Activated CD4-positive, alpha-beta T cell treated with anti-CD3 and anti-CD28 coated beads, Interleukin-2, amount 10 ng/mL, durations not matched to agents 7 days and 5 days (primary cell): ENCODE measurements at regions of chr11 and their contacts with region 1.

Region 1: DNA sequence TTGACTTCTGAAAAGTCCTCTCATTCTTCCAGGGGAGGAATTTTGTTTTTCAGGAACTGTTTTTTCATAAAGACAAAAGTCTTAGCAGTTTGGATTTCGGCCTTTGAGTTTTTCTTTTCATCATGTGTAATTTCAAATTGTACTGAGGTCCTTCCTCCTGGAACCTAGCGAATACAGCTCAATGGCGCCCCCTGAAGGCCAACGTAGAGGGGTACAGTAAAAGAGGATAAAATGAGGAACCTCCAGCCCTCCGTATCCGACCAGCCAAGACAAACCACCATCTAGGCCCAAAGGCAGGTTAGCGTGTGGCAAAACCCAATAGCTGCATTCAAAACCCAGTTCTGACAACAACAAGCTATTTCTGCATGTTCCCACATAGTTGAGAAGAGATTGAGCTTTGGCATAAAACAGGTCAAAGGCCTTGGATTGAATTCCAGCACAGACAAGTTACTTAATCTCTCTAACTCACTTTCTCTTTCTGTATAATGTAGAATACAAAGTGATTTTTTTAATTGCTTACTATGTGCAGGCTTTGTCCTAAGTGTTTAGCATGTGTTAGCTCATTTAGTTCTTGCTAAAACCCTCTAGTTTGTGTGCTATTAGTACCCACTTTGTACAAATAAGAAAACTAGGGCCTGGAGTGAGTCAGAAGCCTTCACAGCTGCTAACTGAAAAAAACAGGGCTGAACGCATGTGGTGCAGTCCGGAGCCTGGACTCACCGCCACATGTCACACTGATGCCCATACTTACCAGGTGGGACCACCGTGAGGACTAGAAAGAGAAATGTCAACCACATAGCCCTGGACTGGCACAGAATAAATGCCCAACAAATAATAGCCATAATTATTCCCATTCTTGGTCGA is 43.2 kb upstream of the ETS1 start:
- DNase-seq: peak; percentile 94
- H3K4me3 Mint-ChIP-seq: peak overlapping the region; percentile 24
- H3K27ac Mint-ChIP-seq: peak overlapping the region; percentile 71
- H3K4me1 Mint-ChIP-seq: peaks cover 71% of the 10 kb centered on the region
- H3K27me3 Mint-ChIP-seq: no peaks in the 10 kb centered on the region

Region 2: DNA sequence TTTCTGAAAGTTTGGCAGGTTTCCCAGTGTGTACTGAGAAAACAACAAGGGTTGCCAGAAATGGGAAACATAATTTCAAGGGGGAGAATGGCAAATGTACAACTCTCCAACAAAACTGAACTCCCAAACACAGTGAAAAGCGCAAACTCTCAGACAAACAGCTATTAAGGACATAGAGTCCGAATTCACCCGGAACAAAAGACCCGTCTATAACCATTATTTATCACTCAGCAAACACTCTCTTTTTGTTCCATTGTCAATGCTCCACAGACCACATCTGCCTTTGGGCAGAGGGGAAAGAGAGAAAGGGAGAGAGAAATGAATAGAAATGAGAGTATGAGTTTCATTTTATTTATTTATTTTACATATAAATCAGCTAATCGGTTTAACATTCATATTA is 1651.7 kb before region 1 on chr11:
- CTCF ChIA-PET with region 1: no interaction called
- POLR2A ChIA-PET with region 1: no interaction called
- DNase-seq: no peak
- H3K4me3 Mint-ChIP-seq: no peak overlapping the region
- H3K27ac Mint-ChIP-seq: no peak overlapping the region
- H3K4me1 Mint-ChIP-seq: no peaks in the 10 kb centered on the region
- H3K27me3 Mint-ChIP-seq: peaks cover 10% of the 10 kb centered on the region

Region 3: DNA sequence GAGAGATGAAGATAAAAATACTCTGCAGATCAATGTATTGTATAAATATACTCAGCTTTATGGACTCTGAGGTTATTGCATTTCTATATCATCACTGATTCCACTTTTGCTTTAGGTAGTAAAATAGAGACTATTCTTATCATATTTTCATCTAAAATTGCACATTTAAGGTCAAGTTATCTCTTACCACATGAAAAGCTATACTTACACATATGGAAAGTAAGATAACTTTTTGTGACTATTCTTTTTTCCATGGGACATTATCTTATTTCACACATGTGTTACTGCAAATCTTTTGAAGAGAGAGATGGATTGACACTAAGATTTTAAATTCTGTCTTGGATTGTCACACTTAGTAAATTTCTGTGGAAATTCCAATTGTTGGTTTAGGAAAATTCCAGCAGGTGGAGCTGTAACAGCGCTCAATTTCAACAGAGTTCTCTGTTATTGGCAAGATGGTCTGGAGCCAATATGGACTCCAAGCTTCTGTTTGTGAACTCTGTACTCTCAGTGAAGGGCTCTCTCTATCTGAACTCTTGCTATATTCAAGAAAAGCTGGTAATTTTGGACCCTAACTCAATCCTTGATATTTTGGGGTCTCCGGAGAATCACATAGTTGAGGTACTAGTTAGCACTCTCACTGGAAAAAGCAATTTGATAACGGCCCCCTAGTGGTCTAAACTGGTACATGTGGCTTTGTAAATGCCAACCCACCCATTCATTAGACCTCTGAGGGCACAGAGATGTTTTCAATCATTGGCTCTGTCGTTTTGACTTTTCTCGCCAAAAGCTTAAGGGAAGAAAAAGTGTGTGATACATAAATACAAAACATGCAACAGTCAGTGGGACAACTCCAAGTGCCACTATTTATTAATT is 472.9 kb before region 1 on chr11:
- CTCF ChIA-PET with region 1: interaction called, 15 read pairs
- POLR2A ChIA-PET with region 1: no interaction called
- DNase-seq: peak; percentile 74
- H3K4me3 Mint-ChIP-seq: peak overlapping the region; percentile 50
- H3K27ac Mint-ChIP-seq: peak overlapping the region; percentile 70
- H3K4me1 Mint-ChIP-seq: peaks cover 10% of the 10 kb centered on the region
- H3K27me3 Mint-ChIP-seq: peaks cover 20% of the 10 kb centered on the region

Region 4: GRCh38 chr11:128290106-128290840 is 340.3 kb before region 1 on chr11:
- CTCF ChIA-PET with region 1: interaction called, 14 read pairs
- POLR2A ChIA-PET with region 1: interaction called, 3 read pairs
- DNase-seq: peak; percentile 86
- H3K4me3 Mint-ChIP-seq: peak overlapping the region; percentile 83
- H3K27ac Mint-ChIP-seq: peak overlapping the region; percentile 94
- H3K4me1 Mint-ChIP-seq: peaks cover 90% of the 10 kb centered on the region
- H3K27me3 Mint-ChIP-seq: peaks cover 2% of the 10 kb centered on the region

Region 5: DNA sequence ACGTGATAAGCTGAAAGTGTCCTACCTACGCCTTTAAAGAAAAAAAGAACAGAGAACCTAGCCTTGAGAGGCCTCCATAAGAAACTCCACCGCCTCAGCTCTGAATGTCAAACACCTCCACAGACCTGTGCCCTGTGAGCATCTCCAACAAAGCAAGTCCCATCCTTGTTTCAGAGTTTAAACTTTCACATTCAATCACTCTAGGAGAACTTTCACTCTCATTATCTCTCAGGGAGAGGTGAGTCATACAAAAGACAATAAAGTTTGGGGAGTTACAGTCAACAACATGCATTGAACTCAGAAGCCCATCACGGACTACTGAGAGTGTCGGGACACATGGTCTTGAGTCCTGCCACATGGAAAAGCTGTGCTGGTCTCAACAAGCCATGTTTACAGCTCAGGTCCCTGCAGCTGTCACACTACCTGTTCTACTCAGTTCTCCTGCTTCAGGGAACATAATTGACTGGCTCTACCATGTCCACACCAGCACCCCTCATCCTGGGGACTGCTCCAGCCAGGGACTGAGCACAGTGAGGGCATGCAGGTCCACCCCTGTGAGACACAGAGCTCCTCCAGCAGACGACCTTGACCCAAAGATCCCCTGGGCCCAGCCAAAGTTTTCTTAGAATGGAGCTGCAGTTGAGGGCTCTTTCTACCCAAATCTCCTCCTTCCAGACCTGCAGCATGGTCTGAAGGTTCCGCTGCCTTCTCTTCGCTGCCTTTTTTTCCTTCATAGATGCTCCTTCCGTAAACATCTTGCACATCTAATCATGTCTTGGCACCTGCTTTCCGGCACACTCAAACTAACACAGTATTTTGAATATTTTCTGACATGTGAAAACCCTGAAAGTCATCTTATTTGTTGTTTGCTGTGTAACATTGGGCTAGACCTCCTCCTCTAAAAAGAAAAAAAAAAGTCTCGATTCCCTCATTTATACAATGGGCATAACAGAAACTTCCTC is 158.2 kb before region 1 on chr11:
- CTCF ChIA-PET with region 1: interaction called, 13 read pairs
- POLR2A ChIA-PET with region 1: interaction called, 3 read pairs
- DNase-seq: peak; percentile 72
- H3K4me3 Mint-ChIP-seq: peak overlapping the region; percentile 70
- H3K27ac Mint-ChIP-seq: peak overlapping the region; percentile 95
- H3K4me1 Mint-ChIP-seq: peaks cover 96% of the 10 kb centered on the region
- H3K27me3 Mint-ChIP-seq: no peaks in the 10 kb centered on the region

Region 6: GRCh38 chr11:128522055-128522942 is 108.3 kb before region 1 on chr11:
- CTCF ChIA-PET with region 1: interaction called, 32 read pairs
- POLR2A ChIA-PET with region 1: interaction called, 11 read pairs
- DNase-seq: peak; percentile 92
- H3K4me3 Mint-ChIP-seq: peak overlapping the region; percentile 96
- H3K27ac Mint-ChIP-seq: peak overlapping the region; percentile 93
- H3K4me1 Mint-ChIP-seq: peaks cover 41% of the 10 kb centered on the region
- H3K27me3 Mint-ChIP-seq: no peaks in the 10 kb centered on the region